Panc1 (cell line): ENCODE measurements at regions of chr17 and their contacts with region 1.

Region 1: GRCh38 chr17:39391448-39391847 is 10.0 kb downstream of the FBXL20 start:
- DNase-seq: no peak
- ATAC-seq: no peak
- H3K4me3 ChIP-seq: no peak overlapping the region
- H3K27ac ChIP-seq: no peak overlapping the region
- H3K4me1 ChIP-seq: no peaks in the 10 kb centered on the region
- H3K27me3 ChIP-seq: no peaks in the 10 kb centered on the region
- CTCF ChIP-seq: no peak

Region 2: DNA sequence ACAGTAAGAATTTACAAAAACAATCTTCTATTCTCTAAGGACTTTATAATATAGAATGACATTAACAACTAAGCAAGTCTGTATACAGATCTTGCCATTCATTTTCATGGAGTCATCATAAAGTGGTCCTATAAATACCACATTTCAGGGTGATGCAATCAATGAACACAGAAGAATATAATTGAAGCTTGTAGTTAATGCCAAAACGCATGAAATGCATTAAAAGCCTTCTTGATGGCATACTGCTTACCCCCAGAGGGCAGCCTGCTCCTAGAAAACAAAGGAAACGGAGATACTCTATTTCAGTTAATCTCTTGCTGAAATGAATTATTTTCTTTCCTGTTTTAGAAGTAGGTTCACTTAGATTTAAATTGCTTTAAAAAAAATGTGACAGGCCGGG is 120.5 kb before region 1 on chr17:
- CTCF ChIA-PET with region 1: interaction called, 13 read pairs
- POLR2A ChIA-PET with region 1: no interaction called
- in situ Hi-C with region 1: no loop called
- intact Hi-C with region 1: no loop called
- DNase-seq: peak; percentile 2
- ATAC-seq: no peak
- H3K4me3 ChIP-seq: no peak overlapping the region
- H3K27ac ChIP-seq: no peak overlapping the region
- H3K4me1 ChIP-seq: no peaks in the 10 kb centered on the region
- H3K27me3 ChIP-seq: no peaks in the 10 kb centered on the region
- CTCF ChIP-seq: no peak

Region 3: GRCh38 chr17:39360537-39360936 is 30.9 kb before region 1 on chr17:
- CTCF ChIA-PET with region 1: no interaction called
- POLR2A ChIA-PET with region 1: no interaction called
- in situ Hi-C with region 1: no loop called
- intact Hi-C with region 1: no loop called
- DNase-seq: no peak
- ATAC-seq: no peak
- H3K4me3 ChIP-seq: no peak overlapping the region
- H3K27ac ChIP-seq: no peak overlapping the region
- H3K4me1 ChIP-seq: no peaks in the 10 kb centered on the region
- H3K27me3 ChIP-seq: no peaks in the 10 kb centered on the region
- CTCF ChIP-seq: no peak

Region 4: GRCh38 chr17:39485555-39485954 is 94.1 kb after region 1 on chr17:
- CTCF ChIA-PET with region 1: no interaction called
- POLR2A ChIA-PET with region 1: no interaction called
- in situ Hi-C with region 1: no loop called
- intact Hi-C with region 1: no loop called
- DNase-seq: peak; percentile 13
- ATAC-seq: 0 out of 2 replicates have a peak, but pooled peaks have one; percentile 60
- H3K4me3 ChIP-seq: no peak overlapping the region
- H3K27ac ChIP-seq: no peak overlapping the region
- H3K4me1 ChIP-seq: no peaks in the 10 kb centered on the region
- H3K27me3 ChIP-seq: no peaks in the 10 kb centered on the region
- CTCF ChIP-seq: no peak